ENCODE measurements at regions of chr1 and their contacts with region 1.

Region 1: DNA sequence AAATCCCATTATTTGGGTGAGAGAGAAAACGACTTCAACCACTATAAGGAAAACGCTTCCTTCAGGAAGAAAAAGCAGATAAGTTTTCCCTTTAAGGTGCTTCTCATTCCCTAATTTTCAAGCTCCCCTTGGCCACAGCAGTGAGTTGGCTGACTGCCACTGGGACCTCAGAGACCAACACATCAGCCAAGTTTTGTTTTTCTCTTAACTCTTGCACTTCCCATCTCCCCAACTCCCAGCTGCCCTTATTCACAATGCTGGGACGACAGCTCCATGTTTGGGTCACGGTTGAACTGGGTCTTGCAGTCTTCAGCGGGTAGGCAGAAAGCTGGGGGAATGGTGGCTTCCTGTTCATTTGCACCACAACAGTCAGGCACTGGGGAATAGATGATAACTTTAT is 18.9 kb downstream of the SGIP1 start:
- DNase-seq: peak in 2 of 10 donors; percentile 15 to 80

Region 2: DNA sequence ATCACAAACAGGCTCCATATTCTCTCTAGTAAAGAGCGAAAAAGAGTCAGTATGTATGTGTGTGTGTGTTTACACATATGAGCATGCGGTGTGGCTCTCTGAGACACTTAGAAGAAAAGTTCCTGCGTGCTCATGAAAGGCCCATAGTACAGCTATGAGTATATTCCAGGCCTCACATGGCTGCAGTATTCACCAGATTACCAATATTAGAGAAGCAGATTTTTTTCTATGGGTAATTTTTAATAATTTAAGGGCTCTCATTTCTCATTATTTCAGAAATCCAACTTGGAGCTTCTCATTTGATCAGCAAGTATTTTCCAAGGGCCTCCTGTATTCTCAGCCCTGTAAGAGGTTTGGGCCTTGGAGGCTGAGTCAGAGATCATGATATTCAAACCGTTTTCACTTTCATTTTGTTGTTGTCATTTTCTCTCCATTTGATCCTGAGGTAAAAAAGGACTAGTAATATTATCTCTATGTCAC is 251.8 kb before region 1 on chr1:
- intact Hi-C with region 1: no loop called
- DNase-seq: no peak

Region 3: GRCh38 chr1:66652556-66652955 is 99.7 kb after region 1 on chr1:
- intact Hi-C with region 1: loop called (anchors 10 kb)
- DNase-seq: no peak

Measured in posterior cingulate gyrus (tissue), 11 donors.